ENCODE measurements at regions of chr2 and their contacts with region 1.

Region 1: DNA sequence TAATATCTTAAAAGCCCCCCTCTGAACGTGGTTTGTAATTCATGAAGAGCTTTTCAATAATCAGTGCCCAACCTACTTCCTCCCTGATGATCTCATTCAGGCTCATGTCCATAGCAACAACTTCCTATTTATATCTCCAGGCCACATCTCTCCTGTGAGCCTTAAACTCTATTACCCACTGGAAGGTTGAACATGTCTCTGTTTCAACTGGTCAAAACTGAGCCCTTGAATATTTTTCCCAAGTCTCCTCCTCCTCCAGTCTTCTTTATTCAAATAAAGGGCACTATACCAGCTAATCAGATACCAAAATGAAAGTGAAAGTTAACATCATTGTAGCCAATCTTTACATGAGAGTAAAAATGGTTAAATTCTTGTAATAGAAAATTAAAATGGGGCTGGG is 63.7 kb upstream of the ITGA4 start:
- DNase-seq: peak; percentile 67
- ATAC-seq: peak; percentile 73
- H3K4me3 ChIP-seq: peak overlapping the region in 1 of 5 experiments; percentile 34
- H3K4me3 Mint-ChIP-seq: peak overlapping the region; percentile 74
- H3K27ac ChIP-seq: peak overlapping the region; percentile 47 to 88
- H3K27ac Mint-ChIP-seq: peak overlapping the region; percentile 78
- H3K4me1 ChIP-seq: peaks cover 24 to 30% of the 10 kb centered on the region in 2 donors
- H3K4me1 Mint-ChIP-seq: peaks cover 32% of the 10 kb centered on the region
- H3K27me3 ChIP-seq: no peaks in the 10 kb centered on the region
- H3K27me3 Mint-ChIP-seq: no peaks in the 10 kb centered on the region
- CTCF ChIP-seq: no peak

Region 2: DNA sequence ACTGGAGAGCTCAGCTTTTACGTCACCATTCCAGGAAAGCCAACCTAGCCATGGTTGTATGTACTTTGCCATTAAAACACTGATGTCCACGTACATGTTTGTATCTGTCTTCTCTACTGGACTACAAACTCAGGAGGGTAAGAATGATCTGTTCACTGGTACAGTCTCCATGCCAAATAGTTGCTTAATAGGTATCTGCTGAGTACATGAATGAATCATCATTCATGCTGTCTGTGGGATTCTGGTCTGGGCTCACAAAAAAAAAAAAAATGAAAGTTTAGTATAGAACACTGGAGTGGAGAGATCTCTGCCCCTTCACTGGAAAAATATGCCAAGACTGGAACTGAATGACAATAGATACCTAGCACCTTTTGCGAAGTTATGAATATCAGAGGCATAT is 38.8 kb before region 1 on chr2:
- CTCF ChIA-PET with region 1: interaction called, 4 read pairs
- POLR2A ChIA-PET with region 1: interaction called, 5 read pairs
- intact Hi-C with region 1: loop called (anchors 5 kb)
- DNase-seq: no peak
- ATAC-seq: no peak
- H3K4me3 ChIP-seq: no peak overlapping the region
- H3K4me3 Mint-ChIP-seq: no peak overlapping the region
- H3K27ac ChIP-seq: no peak overlapping the region
- H3K27ac Mint-ChIP-seq: no peak overlapping the region
- H3K4me1 ChIP-seq: peaks cover 18 to 23% of the 10 kb centered on the region in 2 donors
- H3K4me1 Mint-ChIP-seq: peaks cover 28% of the 10 kb centered on the region
- H3K27me3 ChIP-seq: no peaks in the 10 kb centered on the region
- H3K27me3 Mint-ChIP-seq: no peaks in the 10 kb centered on the region
- CTCF ChIP-seq: no peak

Region 3: DNA sequence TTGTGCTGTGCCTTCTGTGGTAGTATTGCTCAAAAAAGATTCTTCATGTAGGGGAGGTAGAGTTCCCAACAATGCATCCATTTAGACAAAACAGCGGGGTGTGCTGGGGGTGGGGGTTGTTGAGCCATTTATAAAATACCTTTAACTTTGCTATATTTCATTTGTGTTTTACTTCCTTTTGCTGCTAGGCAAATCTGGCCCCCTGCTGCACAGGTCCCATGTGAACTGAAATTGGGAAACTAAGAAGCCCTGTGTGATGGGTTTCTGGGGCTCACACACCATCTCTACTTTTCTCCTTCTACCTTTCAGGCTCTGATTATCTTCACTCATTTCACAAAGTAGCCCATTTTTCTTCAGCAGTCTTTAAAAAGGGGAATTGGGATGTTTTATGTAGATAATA is 11.0 kb after region 1 on chr2:
- CTCF ChIA-PET with region 1: no interaction called
- POLR2A ChIA-PET with region 1: no interaction called
- intact Hi-C with region 1: loop called (anchors 2 kb)
- DNase-seq: no peak
- ATAC-seq: peak; percentile 28
- H3K4me3 ChIP-seq: no peak overlapping the region
- H3K4me3 Mint-ChIP-seq: no peak overlapping the region
- H3K27ac ChIP-seq: no peak overlapping the region
- H3K27ac Mint-ChIP-seq: no peak overlapping the region
- H3K4me1 ChIP-seq: peaks cover 22 to 23% of the 10 kb centered on the region in 2 donors
- H3K4me1 Mint-ChIP-seq: peaks cover 52% of the 10 kb centered on the region
- H3K27me3 ChIP-seq: no peaks in the 10 kb centered on the region
- H3K27me3 Mint-ChIP-seq: no peaks in the 10 kb centered on the region
- CTCF ChIP-seq: no peak

Region 4: DNA sequence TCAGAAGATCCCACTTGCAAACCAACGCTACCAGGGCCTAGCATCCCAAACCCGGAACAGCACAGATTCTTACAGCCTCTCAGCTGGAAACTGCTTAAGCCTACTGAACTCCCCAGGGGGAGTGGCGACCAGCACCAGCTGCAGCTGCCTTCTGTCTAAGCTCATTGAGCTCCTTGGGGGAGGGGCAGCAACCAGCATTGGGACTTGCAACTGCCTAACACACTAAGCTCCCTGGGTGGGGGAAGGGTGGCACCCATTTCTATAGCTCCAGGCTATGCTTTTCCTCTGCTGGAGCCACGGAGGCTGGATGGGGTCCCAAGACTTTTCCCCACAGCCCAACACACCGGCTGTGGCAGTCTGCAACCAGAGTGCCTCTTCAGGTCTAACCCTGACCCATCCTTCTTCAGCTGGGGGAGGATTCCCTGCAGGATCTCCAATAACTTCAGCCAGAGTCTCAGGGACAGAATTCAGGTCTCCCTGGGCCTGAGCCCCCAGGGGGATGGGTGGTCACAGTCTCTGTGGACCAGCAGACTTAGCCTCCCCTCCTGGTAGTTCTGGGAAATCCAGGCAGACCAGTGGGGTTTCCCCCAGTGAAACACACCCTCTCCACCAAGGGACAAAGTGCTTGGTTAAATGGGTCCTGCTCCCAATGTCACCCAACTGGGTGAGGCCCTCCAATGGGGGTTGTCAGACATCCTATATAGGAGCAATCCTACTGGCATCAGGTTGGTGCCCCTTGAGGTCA is 17.8 kb after region 1 on chr2:
- CTCF ChIA-PET with region 1: interaction called, 5 read pairs
- POLR2A ChIA-PET with region 1: no interaction called
- intact Hi-C with region 1: loop called (anchors 2 kb)
- DNase-seq: peak; percentile 86
- ATAC-seq: peak; percentile 97
- H3K4me3 ChIP-seq: peak overlapping the region in 2 of 5 experiments; percentile 6 to 46
- H3K4me3 Mint-ChIP-seq: peak overlapping the region; percentile 56
- H3K27ac ChIP-seq: peak overlapping the region; percentile 59
- H3K27ac Mint-ChIP-seq: peak overlapping the region; percentile 89
- H3K4me1 ChIP-seq: peaks cover 35 to 47% of the 10 kb centered on the region in 2 donors
- H3K4me1 Mint-ChIP-seq: peaks cover 81% of the 10 kb centered on the region
- H3K27me3 ChIP-seq: no peaks in the 10 kb centered on the region
- H3K27me3 Mint-ChIP-seq: no peaks in the 10 kb centered on the region
- CTCF ChIP-seq: no peak